Vagina (tissue), 2 donors: ENCODE measurements at regions of chr2 and their contacts with region 1.

Region 1: DNA sequence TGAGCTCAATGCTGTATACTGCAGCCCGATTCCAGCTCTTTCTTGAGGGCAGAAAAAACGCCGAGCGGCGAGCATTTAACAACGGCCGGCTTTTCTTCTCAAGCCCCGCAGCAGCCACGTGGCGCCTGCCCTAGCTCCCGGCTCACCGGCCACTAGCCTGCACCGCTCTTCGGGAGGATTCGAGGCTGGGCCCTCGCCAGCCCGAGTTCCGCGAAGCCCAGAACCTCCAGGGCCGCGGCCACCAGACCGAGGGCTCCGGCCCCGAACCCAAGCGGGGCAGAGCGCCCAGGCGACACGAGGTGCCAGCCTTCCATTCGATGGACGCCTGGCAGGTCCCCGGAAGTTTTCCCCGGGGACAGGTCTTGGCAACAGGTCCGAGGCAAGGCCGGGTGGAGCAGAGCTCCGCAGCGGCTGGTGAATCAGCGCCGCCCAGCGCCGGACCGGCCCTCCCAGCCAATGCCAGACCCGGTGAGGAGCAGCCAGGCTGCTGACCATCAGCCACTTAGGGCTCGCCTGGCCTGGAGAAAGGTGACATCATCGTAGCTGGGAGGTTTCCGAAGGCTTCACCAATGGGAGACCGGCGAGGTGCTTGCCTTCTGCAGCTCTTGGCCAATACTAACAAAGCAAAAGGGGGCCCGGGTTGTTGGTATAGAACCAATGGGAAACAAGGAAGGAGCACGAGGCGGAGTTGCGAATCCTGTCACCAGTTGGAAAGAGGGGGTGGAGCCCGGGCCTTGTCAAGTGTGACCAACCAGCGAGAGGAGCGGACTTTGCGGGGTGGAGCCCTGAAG is 544 bp upstream of the MXD1 start:
- DNase-seq: peak; percentile 100
- H3K4me3 ChIP-seq: peak overlapping the region; percentile 78 to 85
- H3K27ac ChIP-seq: peak overlapping the region; percentile 99
- H3K4me1 ChIP-seq: peaks cover 28% of the 10 kb centered on the region
- H3K27me3 ChIP-seq: no peaks in the 10 kb centered on the region
- CTCF ChIP-seq: peak in 1 of 3 experiments; percentile 13
- POLR2A ChIP-seq: peak; percentile 70 to 95

Region 2: GRCh38 chr2:69946351-69947077 is 32.1 kb after region 1 on chr2:
- intact Hi-C with region 1: no loop called
- DNase-seq: peak in 1 of 2 donors; percentile 67
- H3K4me3 ChIP-seq: no peak overlapping the region
- H3K27ac ChIP-seq: no peak overlapping the region
- H3K4me1 ChIP-seq: no peaks in the 10 kb centered on the region
- H3K27me3 ChIP-seq: no peaks in the 10 kb centered on the region
- CTCF ChIP-seq: no peak
- POLR2A ChIP-seq: no peak

Region 3: DNA sequence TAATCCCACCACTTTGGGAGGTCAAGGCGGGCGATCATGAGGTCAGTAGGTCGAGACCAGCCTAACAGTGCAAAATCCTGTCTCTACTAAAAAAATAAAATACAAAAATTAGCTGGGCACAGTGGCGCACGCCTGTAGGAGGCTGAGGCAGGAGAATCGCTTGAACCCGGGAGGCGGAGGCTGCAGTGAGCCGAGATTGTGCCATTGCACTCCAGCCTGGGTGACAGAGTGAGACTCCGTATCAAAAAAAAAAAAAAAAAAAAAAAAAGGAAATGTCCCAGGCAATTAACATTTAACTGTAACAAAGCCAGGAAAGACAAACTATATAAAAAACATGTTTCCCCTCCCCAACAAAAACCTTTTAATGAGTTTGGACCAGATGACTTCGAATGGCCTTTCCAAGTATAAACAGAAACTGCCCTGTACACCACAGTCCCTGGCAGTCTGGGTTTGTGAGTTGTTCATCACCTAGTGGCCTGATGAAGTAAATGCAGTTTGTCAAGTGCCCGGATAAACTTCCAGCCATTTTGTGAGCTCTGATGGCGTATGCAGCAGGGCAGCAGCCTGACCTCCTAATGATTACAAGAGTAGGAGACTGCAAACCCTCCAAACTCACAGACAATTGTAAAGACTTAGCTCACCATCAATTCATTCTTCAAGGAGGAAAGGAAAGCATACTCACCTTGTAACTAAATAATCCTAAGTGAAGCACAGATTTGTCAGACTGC is 156.3 kb after region 1 on chr2:
- intact Hi-C with region 1: loop called (anchors 5 kb)
- DNase-seq: no peak
- H3K4me3 ChIP-seq: no peak overlapping the region
- H3K27ac ChIP-seq: peak overlapping the region; percentile 78
- H3K4me1 ChIP-seq: peaks cover 20% of the 10 kb centered on the region
- H3K27me3 ChIP-seq: no peaks in the 10 kb centered on the region
- CTCF ChIP-seq: peak; percentile 49 to 82 (median 64)
- POLR2A ChIP-seq: no peak

Region 4: GRCh38 chr2:70086838-70087701 is 172.7 kb after region 1 on chr2 and contains the start of gene PCBP1:
- intact Hi-C with region 1: loop called (anchors 5 kb)
- DNase-seq: peak in 1 of 2 donors; percentile 97
- H3K4me3 ChIP-seq: peak within 1 kb of the TSS; percentile 91 to 97
- H3K27ac ChIP-seq: peak within 1 kb of the TSS; percentile 100
- H3K4me1 ChIP-seq: peaks cover 57% of the 10 kb centered on the region
- H3K27me3 ChIP-seq: no peaks in the 10 kb centered on the region
- CTCF ChIP-seq: no peak
- POLR2A ChIP-seq: peak in 1 of 2 donors; percentile 94
- total RNA-seq, gene PCBP1: 210 TPM

Region 5: GRCh38 chr2:70142590-70143313 is 228.4 kb after region 1 on chr2:
- intact Hi-C with region 1: loop called (anchors 1 kb)
- DNase-seq: peak; percentile 99
- H3K4me3 ChIP-seq: peak overlapping the region; percentile 71 to 77
- H3K27ac ChIP-seq: peak overlapping the region; percentile 99
- H3K4me1 ChIP-seq: peaks cover 21% of the 10 kb centered on the region
- H3K27me3 ChIP-seq: no peaks in the 10 kb centered on the region
- CTCF ChIP-seq: peak; percentile 93 to 100 (median 99)
- POLR2A ChIP-seq: peak in 1 of 2 donors; percentile 92

Region 6: DNA sequence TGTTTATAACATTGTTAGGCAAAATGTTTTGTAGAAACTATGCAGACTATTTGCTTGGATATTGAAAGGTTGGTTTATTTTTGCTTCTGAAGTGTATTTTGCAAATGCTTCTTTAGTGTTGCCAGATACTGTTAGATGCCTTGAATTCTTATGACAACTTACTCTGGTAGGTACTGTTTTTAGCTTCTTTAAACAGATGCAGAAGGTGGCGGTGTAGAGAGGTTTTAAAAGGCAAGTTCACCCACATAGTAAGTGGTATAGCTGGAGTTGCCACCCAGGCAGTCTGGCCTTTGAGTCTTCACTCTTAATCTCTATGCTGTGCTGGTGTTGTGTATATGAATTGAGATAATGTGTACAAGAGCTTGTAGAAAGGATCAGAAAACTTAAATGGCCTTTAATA is 347.1 kb after region 1 on chr2:
- intact Hi-C with region 1: no loop called
- DNase-seq: no peak
- H3K4me3 ChIP-seq: no peak overlapping the region
- H3K27ac ChIP-seq: no peak overlapping the region
- H3K4me1 ChIP-seq: peaks cover 40% of the 10 kb centered on the region
- H3K27me3 ChIP-seq: no peaks in the 10 kb centered on the region
- CTCF ChIP-seq: no peak
- POLR2A ChIP-seq: no peak